Activated B cell treated with CpG ODN at 0.5 μM for 24 hours (primary cell): ENCODE measurements at regions of chr1 and their contacts with region 1.

Region 1: DNA sequence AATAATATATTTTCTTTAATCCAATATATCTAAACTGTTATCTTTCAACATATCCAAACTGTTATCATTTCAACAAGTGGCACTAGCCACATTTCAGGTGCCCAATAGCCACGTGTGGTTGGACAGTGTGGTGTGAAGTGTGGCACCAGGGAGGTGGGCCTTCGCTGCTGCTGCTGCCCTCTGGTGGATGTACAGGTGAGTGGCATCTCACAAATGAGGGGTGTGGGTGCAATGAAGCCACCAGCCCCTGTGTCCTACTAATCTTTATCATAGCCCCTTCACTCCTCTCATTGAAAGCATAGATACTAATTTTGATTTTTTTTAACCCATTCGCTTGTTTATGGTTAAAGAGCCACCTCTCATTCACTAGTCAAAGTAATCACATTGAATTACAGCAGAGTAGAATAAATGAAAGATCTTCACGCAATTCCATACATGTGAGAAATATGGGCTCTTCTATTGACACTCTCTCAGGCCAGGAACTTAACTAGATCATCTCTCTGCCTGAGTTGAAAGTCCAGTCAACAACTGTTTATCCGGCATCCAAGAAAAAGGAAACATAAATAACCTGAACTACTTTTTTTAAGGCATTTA is 499.2 kb downstream of the OMA1 start:
- DNase-seq: no peak
- ATAC-seq: peak; percentile 42
- H3K4me3 Mint-ChIP-seq: no peak overlapping the region
- H3K27ac Mint-ChIP-seq: no peak overlapping the region
- H3K4me1 Mint-ChIP-seq: no peaks in the 10 kb centered on the region
- H3K27me3 Mint-ChIP-seq: no peaks in the 10 kb centered on the region
- CTCF ChIP-seq: no peak

Region 2: DNA sequence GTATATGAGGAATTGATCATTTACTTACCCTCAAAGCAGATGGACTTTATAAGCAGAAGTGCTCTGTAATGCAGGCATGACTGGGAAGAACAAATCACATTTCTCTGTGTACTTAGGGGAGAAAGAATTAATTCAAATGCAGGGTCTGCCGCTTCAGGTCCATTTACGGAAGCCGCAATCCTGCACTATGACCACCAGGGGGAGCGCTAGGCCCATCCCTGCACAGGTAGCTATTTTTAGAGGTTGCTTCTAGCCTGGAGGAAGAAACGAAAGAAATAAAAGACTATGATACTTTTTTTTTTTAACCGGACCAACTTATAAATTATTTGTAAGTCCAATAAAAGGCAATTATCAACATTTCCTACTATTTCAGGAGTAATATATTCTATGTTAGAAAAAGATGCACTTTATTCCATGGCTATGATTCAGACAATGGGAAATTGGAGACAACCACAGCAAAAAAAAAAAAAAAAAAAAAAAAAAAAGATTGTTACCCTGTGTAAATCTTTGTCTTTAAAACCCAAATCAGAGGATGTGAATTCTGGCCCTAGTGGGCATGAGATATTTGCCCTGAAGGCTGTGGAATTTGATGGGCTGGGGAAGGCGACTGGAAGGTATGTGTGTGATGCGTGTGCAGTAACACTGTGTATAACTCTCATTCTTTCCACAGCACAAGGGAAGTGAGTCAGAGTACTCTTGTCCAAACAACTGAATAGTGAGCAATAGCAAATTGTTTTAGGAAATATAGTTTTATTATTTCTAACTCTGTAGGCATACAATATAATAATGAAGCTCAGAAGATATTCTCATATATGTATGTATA is 1215.3 kb before region 1 on chr1:
- CTCF ChIA-PET with region 1: no interaction called
- POLR2A ChIA-PET with region 1: no interaction called
- intact Hi-C with region 1: loop called (anchors 2 kb)
- DNase-seq: peak; percentile 34
- ATAC-seq: peak; percentile 47
- H3K4me3 Mint-ChIP-seq: no peak overlapping the region
- H3K27ac Mint-ChIP-seq: no peak overlapping the region
- H3K4me1 Mint-ChIP-seq: peaks cover 5% of the 10 kb centered on the region
- H3K27me3 Mint-ChIP-seq: peaks cover 11% of the 10 kb centered on the region
- CTCF ChIP-seq: peak; percentile 96

Region 3: GRCh38 chr1:57874418-57874877 is 172.9 kb before region 1 on chr1:
- CTCF ChIA-PET with region 1: no interaction called
- POLR2A ChIA-PET with region 1: no interaction called
- intact Hi-C with region 1: no loop called
- DNase-seq: no peak
- ATAC-seq: no peak
- H3K4me3 Mint-ChIP-seq: no peak overlapping the region
- H3K27ac Mint-ChIP-seq: no peak overlapping the region
- H3K4me1 Mint-ChIP-seq: no peaks in the 10 kb centered on the region
- H3K27me3 Mint-ChIP-seq: peaks cover 5% of the 10 kb centered on the region
- CTCF ChIP-seq: no peak